CD4-positive, alpha-beta memory T cell (primary cell): ENCODE measurements at regions of chr13 and their contacts with region 1.

Region 1: DNA sequence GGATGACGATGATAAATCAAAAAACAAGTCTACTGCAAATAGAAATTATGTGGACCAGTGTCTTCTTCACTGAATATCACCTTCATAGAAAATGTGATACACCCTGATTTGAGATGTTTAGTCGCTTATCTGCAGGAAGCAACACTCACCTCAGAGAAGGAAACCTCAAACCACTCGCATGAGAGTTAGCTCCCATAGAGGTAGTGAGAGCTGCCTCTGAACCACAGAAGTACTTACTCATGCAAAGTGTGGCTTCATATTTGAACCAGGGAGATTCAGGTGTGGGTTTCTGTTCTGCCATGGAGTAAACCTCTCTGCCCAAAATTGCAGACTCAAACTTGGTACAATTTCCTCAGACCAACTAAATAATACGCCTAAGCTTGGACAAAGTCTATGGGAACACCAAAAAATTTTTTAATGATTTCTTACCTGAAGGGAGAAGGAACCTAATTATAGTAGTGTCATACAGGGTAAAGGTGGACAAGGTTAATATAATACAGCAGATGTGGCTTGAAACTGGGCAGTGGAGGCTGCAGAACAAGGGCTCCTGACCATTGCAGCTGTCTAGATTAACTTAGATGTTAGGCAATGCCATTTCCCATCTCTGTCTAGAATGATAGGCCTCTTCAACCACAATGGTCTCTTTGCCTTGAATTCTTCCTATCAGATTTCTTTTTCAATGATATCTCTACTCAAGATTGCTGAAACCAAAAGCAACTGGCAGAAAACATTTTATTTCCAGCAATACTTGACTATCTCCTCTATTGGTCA is 29.6 kb upstream of the RCBTB2 start:
- DNase-seq: peak; percentile 83 to 92 (median 87)
- H3K4me3 ChIP-seq: peak overlapping the region in 1 of 2 donors; percentile 39
- H3K4me3 Mint-ChIP-seq: peak overlapping the region in 7 of 8 donors; percentile 42 to 79 (median 76)
- H3K27ac ChIP-seq: no peak overlapping the region
- H3K27ac Mint-ChIP-seq: peak overlapping the region in 6 of 7 donors; percentile 44 to 89 (median 62)
- H3K4me1 ChIP-seq: peaks cover 56% of the 10 kb centered on the region
- H3K4me1 Mint-ChIP-seq: peaks cover 45 to 68% (median 58%) of the 10 kb centered on the region in 4 donors
- H3K27me3 ChIP-seq: no peaks in the 10 kb centered on the region
- H3K27me3 Mint-ChIP-seq: no peaks in the 10 kb centered on the region

Region 2: GRCh38 chr13:48029859-48030258 is 532.6 kb before region 1 on chr13:
- CTCF ChIA-PET with region 1: no interaction called
- POLR2A ChIA-PET with region 1: no interaction called
- intact Hi-C with region 1: no loop called
- DNase-seq: no peak
- H3K4me3 ChIP-seq: no peak overlapping the region
- H3K4me3 Mint-ChIP-seq: no peak overlapping the region
- H3K27ac ChIP-seq: no peak overlapping the region
- H3K27ac Mint-ChIP-seq: no peak overlapping the region
- H3K4me1 ChIP-seq: no peaks in the 10 kb centered on the region
- H3K4me1 Mint-ChIP-seq: peaks cover 2 to 10% (median 5%) of the 10 kb centered on the region in 4 donors
- H3K27me3 ChIP-seq: no peaks in the 10 kb centered on the region
- H3K27me3 Mint-ChIP-seq: no peaks in the 10 kb centered on the region

Region 3: GRCh38 chr13:48412881-48413351 is 149.6 kb before region 1 on chr13 and contains the start of gene LPAR6:
- CTCF ChIA-PET with region 1: interaction called, 3 read pairs
- POLR2A ChIA-PET with region 1: interaction called, 20 read pairs
- intact Hi-C with region 1: no loop called
- DNase-seq: peak; percentile 45 to 59 (median 47)
- H3K4me3 ChIP-seq: peak within 1 kb of the TSS; percentile 67 to 90
- H3K4me3 Mint-ChIP-seq: peak within 1 kb of the TSS; percentile 89 to 100 (median 98)
- H3K27ac ChIP-seq: peak within 1 kb of the TSS; percentile 84
- H3K27ac Mint-ChIP-seq: peak within 1 kb of the TSS; percentile 94 to 99 (median 98)
- H3K4me1 ChIP-seq: peaks cover 50% of the 10 kb centered on the region
- H3K4me1 Mint-ChIP-seq: peaks cover 18 to 50% (median 36%) of the 10 kb centered on the region in 4 donors
- H3K27me3 ChIP-seq: no peaks in the 10 kb centered on the region
- H3K27me3 Mint-ChIP-seq: no peaks in the 10 kb centered on the region
- total RNA-seq, gene LPAR6: 89.0 to 91.1 TPM

Region 4: DNA sequence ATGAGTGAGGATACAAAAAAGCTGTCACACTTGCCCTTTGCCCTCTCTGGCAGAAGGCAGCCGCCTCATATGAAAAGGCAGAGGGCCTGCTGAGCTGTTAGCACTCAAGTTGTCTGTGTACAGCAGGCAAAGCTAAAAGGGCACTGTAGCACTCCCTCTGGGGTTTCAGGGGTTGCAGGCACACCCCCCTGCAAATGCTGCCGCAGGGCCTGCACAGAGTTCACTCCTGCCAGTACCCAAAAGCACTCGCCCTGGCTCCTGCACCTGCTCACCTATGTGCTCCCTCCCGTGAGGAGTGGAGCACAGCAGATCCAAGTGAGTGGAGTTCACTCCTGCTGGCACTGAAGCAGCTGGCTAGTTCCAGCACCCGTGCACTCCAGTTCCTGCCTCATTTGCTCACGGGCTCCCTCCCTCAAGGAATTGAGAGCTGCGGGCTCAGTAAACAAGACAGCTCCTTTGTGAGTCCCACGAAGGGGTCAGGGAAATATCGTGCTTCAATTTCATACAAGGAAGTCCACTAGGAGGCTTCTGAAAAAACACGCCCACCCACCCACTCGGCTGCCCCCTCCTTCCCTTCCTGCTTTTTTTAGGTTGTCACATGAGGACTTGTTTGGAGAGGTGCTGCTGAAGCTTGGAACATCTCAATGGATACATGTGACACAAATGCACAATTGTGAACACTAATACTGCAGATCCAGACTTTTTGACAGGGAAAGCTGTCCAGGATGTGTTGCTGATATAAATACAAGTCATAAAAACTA is 19.7 kb before region 1 on chr13:
- CTCF ChIA-PET with region 1: no interaction called
- POLR2A ChIA-PET with region 1: interaction called, 10 read pairs
- intact Hi-C with region 1: no loop called
- DNase-seq: no peak
- H3K4me3 ChIP-seq: no peak overlapping the region
- H3K4me3 Mint-ChIP-seq: no peak overlapping the region
- H3K27ac ChIP-seq: no peak overlapping the region
- H3K27ac Mint-ChIP-seq: no peak overlapping the region
- H3K4me1 ChIP-seq: no peaks in the 10 kb centered on the region
- H3K4me1 Mint-ChIP-seq: peaks cover 0 to 2% (median 0%) of the 10 kb centered on the region in 4 donors
- H3K27me3 ChIP-seq: no peaks in the 10 kb centered on the region
- H3K27me3 Mint-ChIP-seq: no peaks in the 10 kb centered on the region

Region 5: GRCh38 chr13:48580185-48580803 is 17.8 kb after region 1 on chr13:
- CTCF ChIA-PET with region 1: interaction called, 38 read pairs
- POLR2A ChIA-PET with region 1: interaction called, 18 read pairs
- intact Hi-C with region 1: loop called (anchors 1 kb)
- DNase-seq: peak; percentile 64 to 74 (median 70)
- H3K4me3 ChIP-seq: no peak overlapping the region
- H3K4me3 Mint-ChIP-seq: peak overlapping the region in 1 of 8 donors; percentile 31
- H3K27ac ChIP-seq: no peak overlapping the region
- H3K27ac Mint-ChIP-seq: peak overlapping the region in 2 of 7 donors; percentile 0 to 43
- H3K4me1 ChIP-seq: peaks cover 19% of the 10 kb centered on the region
- H3K4me1 Mint-ChIP-seq: peaks cover 4 to 28% (median 13%) of the 10 kb centered on the region in 4 donors
- H3K27me3 ChIP-seq: no peaks in the 10 kb centered on the region
- H3K27me3 Mint-ChIP-seq: peaks cover 0 to 4% of the 10 kb centered on the region in 2 donors